ENCODE measurements at regions of chr12 and their contacts with region 1.

Region 1: GRCh38 chr12:15728118-15728598 is 61.0 kb downstream of the EPS8 start:
- H3K4me3 Mint-ChIP-seq: no peak overlapping the region
- H3K27ac Mint-ChIP-seq: no peak overlapping the region
- H3K4me1 Mint-ChIP-seq: peaks cover 12% of the 10 kb centered on the region
- H3K27me3 Mint-ChIP-seq: no peaks in the 10 kb centered on the region

Region 2: DNA sequence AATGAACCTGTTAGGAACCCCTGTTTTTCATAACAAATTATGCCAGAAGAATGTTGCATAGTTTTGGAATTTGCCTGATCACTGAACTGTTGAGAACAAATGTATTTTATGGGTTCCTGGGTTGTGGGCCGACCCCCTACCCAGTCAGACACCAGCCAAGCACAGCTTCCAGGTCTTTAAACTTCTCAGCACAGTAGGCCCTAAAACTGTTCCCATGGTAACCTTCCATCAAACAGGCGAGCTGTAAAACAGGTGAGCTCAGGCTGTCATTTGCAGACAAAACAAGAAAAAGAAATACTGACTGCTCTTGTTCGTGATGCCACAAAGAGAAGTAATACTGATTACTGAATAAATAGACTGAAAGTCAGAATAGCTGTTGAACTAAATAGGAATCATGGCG is 258.8 kb before region 1 on chr12:
- intact Hi-C with region 1: no loop called
- H3K4me3 Mint-ChIP-seq: no peak overlapping the region
- H3K27ac Mint-ChIP-seq: no peak overlapping the region
- H3K4me1 Mint-ChIP-seq: no peaks in the 10 kb centered on the region
- H3K27me3 Mint-ChIP-seq: peaks cover 20% of the 10 kb centered on the region

Region 3: DNA sequence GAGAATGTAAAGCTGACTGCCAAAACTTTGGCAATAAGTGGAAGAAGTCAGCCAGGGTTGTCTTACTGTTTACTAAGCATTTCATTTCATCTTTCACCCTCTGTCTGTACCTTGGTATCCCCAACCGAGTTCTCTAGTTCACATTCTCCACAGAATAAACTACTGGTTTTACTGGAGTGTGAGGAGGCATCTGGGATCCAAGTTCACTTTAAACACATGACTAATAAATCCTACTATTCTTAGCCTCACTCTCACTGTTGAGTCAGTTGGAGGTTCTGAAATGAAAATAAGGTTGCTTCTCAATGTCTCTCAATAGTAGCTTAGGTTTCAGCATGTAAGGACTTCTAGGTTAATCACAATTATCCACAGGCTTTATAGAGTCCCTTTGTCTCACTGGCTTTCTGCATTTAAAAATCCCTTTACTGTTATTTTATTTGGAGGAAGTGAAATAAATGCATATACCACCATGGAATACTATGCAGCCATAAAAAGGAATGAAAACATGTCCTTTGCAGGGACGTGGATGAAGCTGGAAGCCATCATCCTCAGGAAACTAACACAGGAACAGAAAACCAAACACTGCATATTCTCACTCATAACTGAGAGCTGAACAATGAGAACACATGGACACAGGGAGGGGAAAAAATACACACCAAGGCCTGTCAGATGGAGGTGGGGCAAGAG is 34.8 kb before region 1 on chr12:
- intact Hi-C with region 1: loop called (anchors 5 kb)
- H3K4me3 Mint-ChIP-seq: no peak overlapping the region
- H3K27ac Mint-ChIP-seq: peak overlapping the region; percentile 80
- H3K4me1 Mint-ChIP-seq: peaks cover 60% of the 10 kb centered on the region
- H3K27me3 Mint-ChIP-seq: no peaks in the 10 kb centered on the region

Measured in dendritic cell treated with granulocyte-macrophage colony-stimulating factor and Interleukin-4, amounts not matched to agents 40 ng/mL and 50 ng/mL, for 4 days (primary cell).